Activated CD4-positive, alpha-beta T cell treated with anti-CD3 and anti-CD28 coated beads for 36 hours (primary cell): ENCODE measurements at regions of chr4 and their contacts with region 1.

Region 1: GRCh38 chr4:39892988-39893692 is 84.6 kb downstream of the PDS5A start:
- DNase-seq: no peak
- ATAC-seq: no peak
- H3K4me3 Mint-ChIP-seq: no peak overlapping the region
- H3K27ac Mint-ChIP-seq: no peak overlapping the region
- H3K4me1 Mint-ChIP-seq: no peaks in the 10 kb centered on the region
- H3K27me3 Mint-ChIP-seq: no peaks in the 10 kb centered on the region

Region 2: DNA sequence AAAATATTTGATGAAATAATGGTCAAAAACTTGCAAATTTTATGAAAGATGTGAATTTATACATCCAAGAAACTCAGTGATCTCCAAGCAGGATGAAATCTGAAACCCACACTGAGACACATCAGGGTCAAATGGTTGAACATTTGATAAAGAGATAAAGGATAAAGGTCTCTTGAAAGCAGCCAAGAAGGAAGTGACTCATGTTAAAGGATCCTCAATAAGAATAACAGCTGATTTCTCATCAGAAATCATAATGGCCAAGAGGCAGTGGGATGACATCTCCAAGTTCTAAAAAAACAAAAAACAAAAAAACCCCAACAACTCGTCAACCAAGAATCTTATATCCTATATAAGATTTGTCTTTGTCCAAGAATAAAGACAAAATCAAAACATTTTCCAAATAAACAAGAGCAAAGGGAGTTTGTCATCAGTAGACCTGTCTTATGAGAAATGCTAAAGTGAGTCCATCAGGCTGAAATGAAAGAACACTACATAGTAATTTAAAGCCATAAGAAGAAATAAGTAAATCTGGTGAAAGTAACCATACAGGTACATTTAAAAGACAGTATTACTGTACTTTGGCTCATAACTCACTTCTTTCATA is 37.1 kb before region 1 on chr4:
- CTCF ChIA-PET with region 1: interaction called, 4 read pairs
- POLR2A ChIA-PET with region 1: no interaction called
- intact Hi-C with region 1: loop called in 1 of 2 experiments (anchors 5 kb)
- DNase-seq: no peak
- ATAC-seq: peak; percentile 16
- H3K4me3 Mint-ChIP-seq: no peak overlapping the region
- H3K27ac Mint-ChIP-seq: no peak overlapping the region
- H3K4me1 Mint-ChIP-seq: peaks cover 13% of the 10 kb centered on the region
- H3K27me3 Mint-ChIP-seq: no peaks in the 10 kb centered on the region